Activated naive CD4-positive, alpha-beta T cell treated with anti-CD3 and anti-CD28 coated beads for 36 hours (primary cell): ENCODE measurements at regions of chrX and their contacts with region 1.

Region 1: DNA sequence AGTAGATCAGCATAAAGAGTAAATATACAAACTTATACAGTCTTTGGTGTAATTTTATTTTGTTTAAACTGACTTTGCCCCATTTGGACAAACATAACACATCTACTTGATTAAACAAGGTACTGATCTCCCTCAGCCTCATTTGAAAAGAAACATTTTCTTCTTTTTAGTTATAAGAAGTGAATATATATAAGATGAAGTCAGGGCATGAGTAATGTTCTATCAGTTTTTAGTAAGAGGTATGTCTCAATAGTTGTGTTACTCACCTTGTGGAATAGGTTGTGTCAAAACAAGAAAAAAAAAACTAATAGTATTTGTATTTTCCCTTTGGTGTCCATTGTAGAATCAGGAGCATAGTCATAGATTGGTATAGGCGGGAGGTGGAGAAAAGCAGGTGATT is 327.4 kb downstream of the RPA4 start:
- DNase-seq: no peak
- H3K4me3 Mint-ChIP-seq: no peak overlapping the region
- H3K27ac Mint-ChIP-seq: no peak overlapping the region
- H3K4me1 Mint-ChIP-seq: peaks cover 2% of the 10 kb centered on the region
- H3K27me3 Mint-ChIP-seq: no peaks in the 10 kb centered on the region

Region 2: GRCh38 chrX:97030463-97030862 is 180.6 kb before region 1 on chrX:
- CTCF ChIA-PET with region 1: no interaction called
- intact Hi-C with region 1: loop called (anchors 5 kb)
- DNase-seq: no peak
- H3K4me3 Mint-ChIP-seq: no peak overlapping the region
- H3K27ac Mint-ChIP-seq: no peak overlapping the region
- H3K4me1 Mint-ChIP-seq: peaks cover 7% of the 10 kb centered on the region
- H3K27me3 Mint-ChIP-seq: no peaks in the 10 kb centered on the region

Region 3: DNA sequence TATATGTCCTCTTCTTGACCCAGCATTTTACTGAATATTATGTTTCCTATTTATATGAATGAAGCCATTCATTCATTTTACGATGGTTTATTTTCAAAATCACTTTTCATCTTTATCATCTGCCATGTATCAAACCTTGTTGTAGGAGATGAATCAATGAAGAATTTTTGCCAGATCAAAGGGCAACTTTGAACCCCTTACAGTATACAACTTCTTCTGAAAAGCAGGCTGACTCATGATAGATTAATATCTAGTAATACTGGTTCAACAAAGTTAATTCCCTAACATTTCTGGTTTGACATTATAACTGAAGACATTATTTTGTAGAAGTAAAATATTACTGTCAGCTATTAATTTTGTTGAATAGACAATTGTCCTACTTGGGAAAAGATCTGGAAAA is 101.3 kb before region 1 on chrX:
- CTCF ChIA-PET with region 1: no interaction called
- intact Hi-C with region 1: no loop called
- DNase-seq: no peak
- H3K4me3 Mint-ChIP-seq: no peak overlapping the region
- H3K27ac Mint-ChIP-seq: no peak overlapping the region
- H3K4me1 Mint-ChIP-seq: no peaks in the 10 kb centered on the region
- H3K27me3 Mint-ChIP-seq: no peaks in the 10 kb centered on the region